ENCODE measurements at regions of chr1 and their contacts with region 1.

Region 1: DNA sequence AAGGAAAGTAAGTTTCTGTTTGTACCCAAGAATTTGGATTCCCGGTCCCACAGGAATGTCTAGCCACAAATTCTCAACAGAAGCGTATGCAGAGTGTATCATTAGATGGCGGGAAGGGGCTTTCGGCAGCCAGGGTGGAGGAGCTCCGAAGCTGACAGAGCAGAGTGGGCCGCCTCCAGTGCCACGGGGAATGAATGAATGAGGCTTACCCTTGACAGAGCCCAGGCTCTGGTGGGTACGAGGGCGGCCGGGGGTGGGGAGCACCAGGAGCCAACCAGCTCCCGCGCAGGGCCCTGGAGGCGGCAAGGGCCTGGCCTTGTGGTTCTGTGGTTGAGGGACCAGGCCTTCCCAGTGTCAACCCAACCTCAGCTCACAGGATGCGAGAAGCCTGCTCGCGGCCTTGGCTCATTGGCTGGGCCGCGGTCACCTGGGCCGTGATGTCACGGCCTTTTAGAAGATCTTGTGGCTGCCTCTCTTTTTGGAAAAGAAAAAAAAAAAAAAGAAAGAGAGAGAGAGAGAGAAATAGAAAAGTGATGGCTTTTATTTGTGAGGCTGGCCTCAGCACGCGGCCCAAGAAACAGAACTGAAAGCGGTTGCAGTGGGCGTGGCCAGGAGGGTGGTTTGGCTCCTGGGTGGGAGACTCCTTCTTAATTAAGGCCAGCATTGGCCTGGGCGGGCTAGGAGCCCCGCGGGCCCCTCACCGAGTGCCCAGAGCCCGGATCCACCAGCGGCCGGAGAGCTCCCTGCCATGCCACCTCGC is 34.9 kb upstream of the RUNX3 start:
- DNase-seq: peak; percentile 97
- H3K4me3 Mint-ChIP-seq: peak overlapping the region; percentile 96
- H3K27ac Mint-ChIP-seq: peak overlapping the region; percentile 91
- H3K4me1 Mint-ChIP-seq: peaks cover 84% of the 10 kb centered on the region
- H3K27me3 Mint-ChIP-seq: no peaks in the 10 kb centered on the region

Region 2: GRCh38 chr1:24779689-24780464 is 185.1 kb before region 1 on chr1:
- CTCF ChIA-PET with region 1: no interaction called
- DNase-seq: no peak
- H3K4me3 Mint-ChIP-seq: no peak overlapping the region
- H3K27ac Mint-ChIP-seq: no peak overlapping the region
- H3K4me1 Mint-ChIP-seq: no peaks in the 10 kb centered on the region
- H3K27me3 Mint-ChIP-seq: peaks cover 5% of the 10 kb centered on the region

Region 3: DNA sequence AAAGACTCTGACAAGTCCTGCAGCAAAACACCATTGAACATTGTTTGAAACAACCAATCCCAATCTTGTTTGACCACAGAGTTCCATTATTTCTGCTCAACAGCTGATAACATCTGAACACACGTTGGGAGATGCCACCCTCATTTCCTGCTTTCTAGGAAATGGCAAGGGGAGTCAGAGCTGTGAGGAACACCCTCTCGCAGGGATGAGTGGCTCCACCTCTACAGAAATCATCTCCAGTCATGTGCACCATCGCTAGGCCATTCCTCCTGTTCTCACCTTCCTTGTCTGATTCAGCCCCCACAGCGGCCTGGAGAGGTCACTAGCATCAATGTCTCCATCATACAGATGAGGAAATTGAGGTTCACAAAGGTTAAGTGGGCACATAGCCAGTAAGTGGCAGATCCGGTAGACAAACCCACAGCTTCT is 12.6 kb before region 1 on chr1:
- CTCF ChIA-PET with region 1: interaction called, 21 read pairs
- DNase-seq: peak; percentile 52
- H3K4me3 Mint-ChIP-seq: peak overlapping the region; percentile 42
- H3K27ac Mint-ChIP-seq: peak overlapping the region; percentile 83
- H3K4me1 Mint-ChIP-seq: peaks cover 96% of the 10 kb centered on the region
- H3K27me3 Mint-ChIP-seq: no peaks in the 10 kb centered on the region

Region 4: GRCh38 chr1:24987875-24988557 is 23.0 kb after region 1 on chr1:
- CTCF ChIA-PET with region 1: interaction called, 15 read pairs
- DNase-seq: peak; percentile 42
- H3K4me3 Mint-ChIP-seq: no peak overlapping the region
- H3K27ac Mint-ChIP-seq: peak overlapping the region; percentile 56
- H3K4me1 Mint-ChIP-seq: peaks cover 99% of the 10 kb centered on the region
- H3K27me3 Mint-ChIP-seq: no peaks in the 10 kb centered on the region

Region 5: DNA sequence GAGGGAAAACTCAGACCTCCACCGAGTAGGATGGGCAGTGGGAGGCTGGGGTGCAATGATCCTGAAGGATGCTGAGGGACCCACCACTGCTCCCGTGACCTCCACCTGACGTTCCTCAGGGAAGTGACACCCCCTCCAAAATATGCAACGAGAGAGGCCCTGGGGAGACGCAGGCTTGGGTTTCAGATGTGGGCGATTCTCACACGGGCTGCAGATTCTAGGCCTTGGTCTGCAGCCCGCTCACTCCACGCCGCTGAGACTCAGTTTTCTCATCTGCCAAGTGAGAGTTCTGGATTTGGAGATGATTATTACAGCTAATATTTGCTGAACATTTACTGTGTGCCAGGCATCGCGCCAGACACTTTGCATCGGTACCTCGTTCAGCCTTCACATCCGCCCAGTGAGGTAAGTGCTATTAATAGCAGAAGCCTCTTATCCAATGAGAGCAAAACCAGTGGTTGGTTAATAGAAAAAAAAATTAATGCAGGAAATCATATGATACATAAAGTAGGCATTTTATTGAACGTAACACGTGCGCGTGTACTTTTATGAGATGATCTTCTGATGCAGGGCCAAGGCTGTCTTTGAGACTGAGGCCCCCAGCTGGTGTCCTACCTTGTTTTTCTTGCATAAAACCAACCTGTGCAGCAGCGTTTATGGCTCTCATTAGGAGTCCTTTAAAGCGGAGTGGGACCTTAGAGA is 67.1 kb after region 1 on chr1:
- CTCF ChIA-PET with region 1: interaction called, 190 read pairs
- DNase-seq: peak; percentile 71
- H3K4me3 Mint-ChIP-seq: no peak overlapping the region
- H3K27ac Mint-ChIP-seq: peak overlapping the region; percentile 90
- H3K4me1 Mint-ChIP-seq: peaks cover 77% of the 10 kb centered on the region
- H3K27me3 Mint-ChIP-seq: peaks cover 7% of the 10 kb centered on the region

Measured in activated naive CD4-positive, alpha-beta T cell treated with anti-CD3 and anti-CD28 coated beads, Interleukin-2, amount 10 ng/mL, durations not matched to agents 7 days and 5 days (primary cell).